ENCODE measurements at regions of chr17 and their contacts with region 1.

Region 1: GRCh38 chr17:29777663-29778062 is 152.4 kb downstream of the SSH2 start:
- DNase-seq: no peak
- ATAC-seq: no peak
- H3K4me3 Mint-ChIP-seq: no peak overlapping the region
- H3K27ac Mint-ChIP-seq: no peak overlapping the region
- H3K4me1 Mint-ChIP-seq: peaks cover 14% of the 10 kb centered on the region
- H3K27me3 Mint-ChIP-seq: no peaks in the 10 kb centered on the region
- CTCF ChIP-seq: no peak

Region 2: GRCh38 chr17:29483503-29483902 is 294.2 kb before region 1 on chr17:
- CTCF ChIA-PET with region 1: no interaction called
- POLR2A ChIA-PET with region 1: no interaction called
- intact Hi-C with region 1: no loop called
- DNase-seq: no peak
- ATAC-seq: no peak
- H3K4me3 Mint-ChIP-seq: no peak overlapping the region
- H3K27ac Mint-ChIP-seq: no peak overlapping the region
- H3K4me1 Mint-ChIP-seq: no peaks in the 10 kb centered on the region
- H3K27me3 Mint-ChIP-seq: no peaks in the 10 kb centered on the region
- CTCF ChIP-seq: no peak

Region 3: GRCh38 chr17:29579866-29580771 is 197.5 kb before region 1 on chr17:
- CTCF ChIA-PET with region 1: no interaction called
- POLR2A ChIA-PET with region 1: no interaction called
- intact Hi-C with region 1: loop called (anchors 1 kb)
- DNase-seq: peak; percentile 82
- ATAC-seq: peak; percentile 98
- H3K4me3 Mint-ChIP-seq: no peak overlapping the region
- H3K27ac Mint-ChIP-seq: peak overlapping the region; percentile 71
- H3K4me1 Mint-ChIP-seq: peaks cover 27% of the 10 kb centered on the region
- H3K27me3 Mint-ChIP-seq: no peaks in the 10 kb centered on the region
- CTCF ChIP-seq: no peak

Region 4: DNA sequence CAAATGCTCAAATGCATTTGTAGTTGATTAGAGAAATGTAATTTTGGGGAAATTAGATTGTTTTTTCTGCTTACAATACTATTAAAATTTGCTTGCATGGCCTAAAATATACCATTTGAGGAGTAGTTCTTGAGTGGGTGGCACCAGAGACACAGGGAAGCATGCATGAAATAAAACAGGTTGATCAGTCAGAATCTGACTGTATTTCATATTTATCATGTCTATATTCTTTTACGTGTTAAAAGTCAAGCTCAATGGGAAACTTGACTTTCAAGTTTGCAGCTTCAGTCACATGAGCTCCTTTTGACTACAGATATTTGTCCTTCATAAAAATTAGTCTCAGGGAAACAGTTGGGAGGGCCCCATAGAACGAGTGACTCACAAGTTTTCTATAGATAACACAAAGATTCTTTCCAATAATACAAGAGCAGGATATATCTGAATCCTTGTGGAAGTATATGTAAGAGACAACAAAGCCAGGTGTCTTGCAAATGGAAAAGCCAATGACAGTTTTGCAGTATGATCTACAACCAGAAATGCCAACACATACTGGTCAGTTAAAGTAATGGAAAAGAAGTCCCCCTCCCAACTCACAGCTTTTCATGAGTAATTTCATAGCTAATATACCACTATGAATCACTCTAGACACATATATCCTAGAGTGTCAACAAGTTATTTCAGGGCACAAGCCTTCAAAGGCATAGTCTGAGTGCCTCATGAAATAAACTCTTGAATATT is 112.8 kb before region 1 on chr17:
- CTCF ChIA-PET with region 1: interaction called, 16 read pairs
- POLR2A ChIA-PET with region 1: interaction called, 4 read pairs
- intact Hi-C with region 1: loop called (anchors 1 kb)
- DNase-seq: no peak
- ATAC-seq: peak; percentile 66
- H3K4me3 Mint-ChIP-seq: no peak overlapping the region
- H3K27ac Mint-ChIP-seq: peak overlapping the region; percentile 70
- H3K4me1 Mint-ChIP-seq: peaks cover 18% of the 10 kb centered on the region
- H3K27me3 Mint-ChIP-seq: no peaks in the 10 kb centered on the region
- CTCF ChIP-seq: no peak

Region 5: GRCh38 chr17:29699283-29699682 is 78.4 kb before region 1 on chr17:
- CTCF ChIA-PET with region 1: interaction called, 10 read pairs
- POLR2A ChIA-PET with region 1: interaction called, 11 read pairs
- intact Hi-C with region 1: no loop called
- DNase-seq: no peak
- ATAC-seq: peak; percentile 21
- H3K4me3 Mint-ChIP-seq: no peak overlapping the region
- H3K27ac Mint-ChIP-seq: peak overlapping the region; percentile 19
- H3K4me1 Mint-ChIP-seq: peaks cover 33% of the 10 kb centered on the region
- H3K27me3 Mint-ChIP-seq: no peaks in the 10 kb centered on the region
- CTCF ChIP-seq: no peak

Region 6: DNA sequence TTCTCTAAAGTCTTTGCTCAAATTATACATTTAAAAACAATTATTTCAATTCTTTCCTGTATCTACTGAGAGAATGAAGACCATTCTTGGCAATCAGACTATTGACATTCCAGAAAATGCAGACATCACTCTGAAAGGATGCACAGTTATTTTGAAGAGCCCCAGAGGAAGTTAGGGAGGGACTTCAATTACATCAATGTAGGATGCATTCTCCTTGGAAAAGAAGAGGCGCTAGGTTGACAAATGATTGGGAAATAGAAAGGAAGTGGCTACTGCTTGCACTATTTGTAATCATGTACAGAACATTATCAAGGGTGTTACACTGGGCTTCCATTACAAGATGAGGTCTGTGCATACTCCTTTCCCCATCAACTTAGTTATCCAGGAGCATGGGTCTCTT is 78.0 kb after region 1 on chr17:
- CTCF ChIA-PET with region 1: no interaction called
- POLR2A ChIA-PET with region 1: no interaction called
- intact Hi-C with region 1: no loop called
- DNase-seq: no peak
- ATAC-seq: no peak
- H3K4me3 Mint-ChIP-seq: no peak overlapping the region
- H3K27ac Mint-ChIP-seq: peak overlapping the region; percentile 7
- H3K4me1 Mint-ChIP-seq: peaks cover 14% of the 10 kb centered on the region
- H3K27me3 Mint-ChIP-seq: no peaks in the 10 kb centered on the region
- CTCF ChIP-seq: no peak

Region 7: DNA sequence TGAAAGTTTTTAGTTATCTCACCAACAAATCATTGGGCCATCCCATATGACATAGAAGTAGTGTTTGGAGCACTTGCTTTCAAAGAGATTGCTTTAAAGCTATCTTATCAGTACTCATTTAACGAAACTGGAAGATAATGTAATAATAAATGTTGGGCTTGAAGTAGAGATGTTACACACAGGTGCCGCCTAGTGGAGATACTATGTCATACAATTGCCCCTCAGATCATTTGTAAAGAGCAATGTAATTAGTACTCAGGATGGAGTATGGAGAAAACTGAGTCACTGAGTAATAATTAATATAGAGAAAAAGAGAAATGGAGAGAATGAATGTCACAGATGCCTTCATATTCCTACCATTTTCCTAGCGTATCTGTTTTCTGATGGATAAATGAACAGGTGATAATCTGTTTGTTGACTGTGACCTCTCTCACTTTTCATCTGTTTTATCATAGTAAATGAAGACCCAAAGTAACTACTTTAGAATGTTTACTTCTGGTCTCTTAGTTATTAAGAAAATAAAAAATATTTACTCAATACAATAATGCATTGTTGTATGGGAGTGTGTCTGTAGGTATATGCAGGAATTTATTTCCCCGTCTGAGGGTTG is 244.2 kb after region 1 on chr17:
- CTCF ChIA-PET with region 1: interaction called, 5 read pairs
- POLR2A ChIA-PET with region 1: interaction called, 10 read pairs
- intact Hi-C with region 1: no loop called
- DNase-seq: no peak
- ATAC-seq: peak; percentile 66
- H3K4me3 Mint-ChIP-seq: no peak overlapping the region
- H3K27ac Mint-ChIP-seq: no peak overlapping the region
- H3K4me1 Mint-ChIP-seq: no peaks in the 10 kb centered on the region
- H3K27me3 Mint-ChIP-seq: no peaks in the 10 kb centered on the region
- CTCF ChIP-seq: peak; percentile 83